Vagina (tissue), 2 donors: ENCODE measurements at regions of chr1 and their contacts with region 1.

Region 1: GRCh38 chr1:42504535-42505128 is 41.5 kb downstream of the CCDC30 start:
- DNase-seq: no peak
- H3K4me3 ChIP-seq: no peak overlapping the region
- H3K27ac ChIP-seq: no peak overlapping the region
- H3K4me1 ChIP-seq: no peaks in the 10 kb centered on the region
- H3K27me3 ChIP-seq: no peaks in the 10 kb centered on the region
- CTCF ChIP-seq: no peak
- POLR2A ChIP-seq: no peak

Region 2: DNA sequence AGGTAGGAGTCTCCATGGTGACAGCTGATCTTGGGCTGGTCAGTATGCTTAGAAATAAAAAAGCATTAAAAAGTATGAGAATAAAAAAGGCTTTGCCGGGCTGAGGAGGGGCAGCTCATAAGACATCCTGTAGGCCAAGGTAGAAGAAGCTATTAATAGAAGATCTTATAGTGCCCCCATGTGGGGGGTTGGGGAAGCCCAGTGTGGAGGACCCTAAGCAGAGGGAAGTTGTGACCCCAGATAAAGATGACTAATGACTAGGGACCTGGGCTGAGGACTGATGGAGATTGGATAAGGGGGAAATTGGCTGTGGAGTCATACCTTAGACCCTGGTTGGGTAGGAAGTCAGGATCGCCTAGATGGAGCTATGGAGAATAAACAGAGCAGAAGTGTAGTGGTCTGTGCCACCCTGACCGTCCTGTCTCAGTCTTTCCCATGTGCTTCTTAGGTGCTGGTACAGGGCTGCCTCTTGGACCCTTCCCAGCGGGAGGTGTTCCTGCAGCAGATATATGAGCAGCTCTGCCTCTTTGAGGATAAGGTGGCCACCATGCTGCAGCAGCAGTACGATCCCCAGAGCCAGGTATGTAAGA is 910.1 kb after region 1 on chr1:
- intact Hi-C with region 1: loop called (anchors 5 kb)
- DNase-seq: no peak
- H3K4me3 ChIP-seq: no peak overlapping the region
- H3K27ac ChIP-seq: no peak overlapping the region
- H3K4me1 ChIP-seq: no peaks in the 10 kb centered on the region
- H3K27me3 ChIP-seq: no peaks in the 10 kb centered on the region
- CTCF ChIP-seq: peak; percentile 12 to 41 (median 35)
- POLR2A ChIP-seq: no peak